CD8-positive, alpha-beta T cell (primary cell): ENCODE measurements at regions of chr21 and their contacts with region 1.

Region 1: DNA sequence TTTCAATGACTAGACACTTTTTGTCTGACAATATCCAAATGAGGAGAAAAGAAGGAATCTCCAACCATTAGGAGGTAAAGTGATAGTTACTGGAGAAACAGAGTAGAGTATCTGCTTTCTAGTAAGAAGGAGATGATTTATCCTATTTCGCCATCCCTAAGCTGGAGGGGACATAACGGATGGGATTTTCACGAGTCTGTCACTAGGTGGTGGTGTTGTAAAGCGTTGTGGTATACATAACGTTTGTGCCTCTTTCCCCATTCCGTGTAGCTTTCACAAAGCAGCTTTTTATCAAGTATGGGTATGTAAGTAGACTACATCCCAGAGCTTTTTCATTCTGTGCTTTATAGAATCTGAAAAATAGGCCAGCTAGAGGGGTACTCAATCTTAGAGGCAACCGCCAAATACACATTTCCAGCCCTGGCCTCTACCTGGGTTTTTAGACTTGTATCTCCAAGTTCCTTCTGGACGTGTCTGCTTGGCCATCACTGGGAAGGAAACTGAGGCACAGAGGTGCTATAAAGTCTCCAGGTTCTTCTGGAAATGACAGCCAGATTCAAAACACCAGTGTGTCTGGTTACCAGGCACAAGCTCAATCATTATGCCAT is 33.3 kb upstream of the FAM3B start:
- DNase-seq: peak in 8 of 9 experiments; percentile 15 to 79 (median 48)
- ATAC-seq: peak; percentile 94
- H3K4me3 ChIP-seq: no peak overlapping the region
- H3K4me3 Mint-ChIP-seq: no peak overlapping the region
- H3K27ac ChIP-seq: no peak overlapping the region
- H3K27ac Mint-ChIP-seq: no peak overlapping the region
- H3K4me1 ChIP-seq: no peaks in the 10 kb centered on the region
- H3K4me1 Mint-ChIP-seq: no peaks in the 10 kb centered on the region
- H3K27me3 ChIP-seq: no peaks in the 10 kb centered on the region
- H3K27me3 Mint-ChIP-seq: peaks cover 11% of the 10 kb centered on the region
- CTCF ChIP-seq: peak; percentile 98

Region 2: DNA sequence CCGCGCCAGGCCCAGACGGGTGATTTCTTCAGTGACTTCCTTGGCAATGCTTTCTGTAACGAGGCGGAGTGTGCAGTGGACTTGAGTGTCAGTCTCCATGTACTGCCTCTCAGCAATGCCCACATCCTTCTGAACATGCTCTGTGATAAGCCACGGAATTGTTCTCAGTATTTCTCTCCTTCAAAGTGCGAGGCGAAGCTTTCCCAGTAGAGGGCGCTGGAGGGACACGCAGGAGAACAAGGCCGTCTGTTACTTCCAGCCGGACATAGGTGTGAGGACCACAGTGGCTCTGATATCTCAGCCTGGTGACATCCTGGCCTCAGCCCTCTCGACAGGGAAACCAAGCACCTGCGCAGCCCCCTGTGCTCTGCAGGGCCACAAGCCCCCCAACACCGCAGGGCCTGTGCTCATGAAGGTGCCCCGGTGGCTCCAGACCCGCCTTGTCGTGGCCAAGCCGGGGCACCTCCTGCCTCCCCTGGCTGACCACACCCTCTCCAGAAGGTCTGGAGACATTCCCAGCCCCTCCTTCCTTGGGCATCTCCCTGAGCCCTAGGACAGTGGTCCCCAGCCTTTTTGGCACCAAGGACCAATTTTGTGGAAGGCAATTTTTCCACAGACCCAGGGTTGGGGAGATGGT is 161.4 kb before region 1 on chr21:
- CTCF ChIA-PET with region 1: no interaction called
- POLR2A ChIA-PET with region 1: no interaction called
- intact Hi-C with region 1: no loop called
- DNase-seq: peak in 6 of 9 experiments; percentile 13 to 51 (median 33)
- ATAC-seq: no peak
- H3K4me3 ChIP-seq: no peak overlapping the region
- H3K4me3 Mint-ChIP-seq: no peak overlapping the region
- H3K27ac ChIP-seq: no peak overlapping the region
- H3K27ac Mint-ChIP-seq: no peak overlapping the region
- H3K4me1 ChIP-seq: no peaks in the 10 kb centered on the region
- H3K4me1 Mint-ChIP-seq: no peaks in the 10 kb centered on the region
- H3K27me3 ChIP-seq: no peaks in the 10 kb centered on the region
- H3K27me3 Mint-ChIP-seq: peaks cover 8% of the 10 kb centered on the region
- CTCF ChIP-seq: peak; percentile 36

Region 3: DNA sequence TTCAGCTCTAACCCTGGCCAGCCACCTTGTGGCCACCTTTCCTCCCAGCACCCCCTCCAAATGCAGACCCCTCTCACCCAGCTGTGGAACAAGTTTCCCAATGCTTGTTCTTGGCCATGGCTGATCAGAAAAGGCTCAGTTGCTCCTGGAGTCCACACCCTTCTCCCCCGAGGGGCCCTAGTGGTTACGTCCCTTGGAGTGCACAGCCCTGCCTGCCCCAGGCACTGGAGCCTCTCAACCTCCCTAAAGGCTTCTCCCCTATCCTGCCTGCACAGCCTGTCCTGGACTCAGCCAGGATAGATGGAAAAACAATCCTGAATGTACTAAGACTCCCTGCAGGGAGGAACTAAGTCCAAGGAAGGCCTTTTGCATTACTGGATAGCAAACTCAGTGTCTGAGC is 97.3 kb after region 1 on chr21:
- CTCF ChIA-PET with region 1: interaction called, 6 read pairs
- POLR2A ChIA-PET with region 1: no interaction called
- intact Hi-C with region 1: loop called in 1 of 2 experiments (anchors 5 kb)
- DNase-seq: no peak
- ATAC-seq: no peak
- H3K4me3 ChIP-seq: no peak overlapping the region
- H3K4me3 Mint-ChIP-seq: no peak overlapping the region
- H3K27ac ChIP-seq: no peak overlapping the region
- H3K27ac Mint-ChIP-seq: no peak overlapping the region
- H3K4me1 ChIP-seq: no peaks in the 10 kb centered on the region
- H3K4me1 Mint-ChIP-seq: no peaks in the 10 kb centered on the region
- H3K27me3 ChIP-seq: no peaks in the 10 kb centered on the region
- H3K27me3 Mint-ChIP-seq: no peaks in the 10 kb centered on the region
- CTCF ChIP-seq: no peak

Region 4: GRCh38 chr21:41445471-41445870 is 162.2 kb after region 1 on chr21:
- CTCF ChIA-PET with region 1: interaction called, 33 read pairs
- POLR2A ChIA-PET with region 1: no interaction called
- intact Hi-C with region 1: no loop called
- DNase-seq: no peak
- ATAC-seq: no peak
- H3K4me3 ChIP-seq: no peak overlapping the region
- H3K4me3 Mint-ChIP-seq: no peak overlapping the region
- H3K27ac ChIP-seq: no peak overlapping the region
- H3K27ac Mint-ChIP-seq: no peak overlapping the region
- H3K4me1 ChIP-seq: no peaks in the 10 kb centered on the region
- H3K4me1 Mint-ChIP-seq: no peaks in the 10 kb centered on the region
- H3K27me3 ChIP-seq: no peaks in the 10 kb centered on the region
- H3K27me3 Mint-ChIP-seq: no peaks in the 10 kb centered on the region
- CTCF ChIP-seq: no peak

Region 5: GRCh38 chr21:41451753-41452676 is 168.7 kb after region 1 on chr21:
- CTCF ChIA-PET with region 1: interaction called, 149 read pairs
- POLR2A ChIA-PET with region 1: interaction called, 3 read pairs
- intact Hi-C with region 1: no loop called
- DNase-seq: no peak
- ATAC-seq: no peak
- H3K4me3 ChIP-seq: no peak overlapping the region
- H3K4me3 Mint-ChIP-seq: no peak overlapping the region
- H3K27ac ChIP-seq: no peak overlapping the region
- H3K27ac Mint-ChIP-seq: no peak overlapping the region
- H3K4me1 ChIP-seq: no peaks in the 10 kb centered on the region
- H3K4me1 Mint-ChIP-seq: no peaks in the 10 kb centered on the region
- H3K27me3 ChIP-seq: no peaks in the 10 kb centered on the region
- H3K27me3 Mint-ChIP-seq: no peaks in the 10 kb centered on the region
- CTCF ChIP-seq: no peak

Region 6: DNA sequence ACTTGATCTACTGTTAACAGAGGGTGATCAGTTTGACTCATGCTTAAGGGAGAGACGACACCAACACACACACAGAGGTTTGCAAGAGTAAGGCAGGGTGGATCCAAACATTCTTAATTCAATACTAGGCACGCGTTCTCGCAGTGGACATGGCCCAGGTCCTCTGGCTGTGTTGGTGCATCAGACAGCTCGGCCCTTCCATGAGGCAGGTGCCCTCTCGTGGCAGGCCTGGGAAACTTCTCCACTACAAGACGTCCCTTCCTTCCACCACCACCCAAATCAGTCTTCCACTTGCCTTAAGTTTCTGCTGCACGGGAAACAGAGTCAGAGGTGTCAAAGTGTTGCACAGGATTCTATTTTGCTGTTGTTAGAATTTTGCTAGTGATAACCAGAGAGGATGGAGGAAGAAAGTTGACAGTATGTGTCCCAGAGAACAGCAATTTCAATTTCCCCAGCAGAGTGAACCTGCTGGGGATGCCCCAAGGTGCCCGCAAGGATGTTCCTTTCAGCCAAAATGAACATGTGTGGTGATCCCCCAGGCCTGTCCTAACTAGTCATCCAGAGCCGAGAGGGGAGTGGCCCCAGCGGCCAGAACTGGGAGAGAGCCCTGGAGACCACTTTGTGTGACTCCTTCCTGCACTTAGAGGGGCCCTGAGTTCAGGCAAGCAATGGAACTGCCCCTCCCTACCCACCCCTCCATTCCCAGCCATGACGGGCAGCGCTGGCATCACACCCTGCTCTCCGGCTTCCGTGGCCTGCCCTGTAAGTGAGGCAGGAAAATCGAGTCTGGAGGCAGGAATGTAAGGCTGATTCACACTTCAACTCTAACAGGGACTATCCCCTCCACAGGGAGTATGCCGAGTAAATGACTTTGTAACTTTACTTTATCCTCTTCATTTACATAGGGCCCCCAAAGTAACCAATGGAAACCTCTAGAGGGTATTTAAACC is 177.5 kb after region 1 on chr21:
- CTCF ChIA-PET with region 1: interaction called, 149 read pairs
- POLR2A ChIA-PET with region 1: interaction called, 3 read pairs
- intact Hi-C with region 1: loop called in 1 of 2 experiments (anchors 1 kb)
- DNase-seq: peak; percentile 7 to 69 (median 56)
- ATAC-seq: peak; percentile 49
- H3K4me3 ChIP-seq: no peak overlapping the region
- H3K4me3 Mint-ChIP-seq: no peak overlapping the region
- H3K27ac ChIP-seq: no peak overlapping the region
- H3K27ac Mint-ChIP-seq: no peak overlapping the region
- H3K4me1 ChIP-seq: no peaks in the 10 kb centered on the region
- H3K4me1 Mint-ChIP-seq: no peaks in the 10 kb centered on the region
- H3K27me3 ChIP-seq: no peaks in the 10 kb centered on the region
- H3K27me3 Mint-ChIP-seq: no peaks in the 10 kb centered on the region
- CTCF ChIP-seq: peak; percentile 55

Region 7: GRCh38 chr21:41816220-41817165 is 533.2 kb after region 1 on chr21:
- CTCF ChIA-PET with region 1: interaction called, 16 read pairs
- POLR2A ChIA-PET with region 1: no interaction called
- intact Hi-C with region 1: loop called in 1 of 2 experiments (anchors 1 kb)
- DNase-seq: peak; percentile 31 to 75 (median 55)
- ATAC-seq: peak; percentile 78
- H3K4me3 ChIP-seq: no peak overlapping the region
- H3K4me3 Mint-ChIP-seq: no peak overlapping the region
- H3K27ac ChIP-seq: no peak overlapping the region
- H3K27ac Mint-ChIP-seq: no peak overlapping the region
- H3K4me1 ChIP-seq: peaks cover 6% of the 10 kb centered on the region
- H3K4me1 Mint-ChIP-seq: peaks cover 7% of the 10 kb centered on the region
- H3K27me3 ChIP-seq: no peaks in the 10 kb centered on the region
- H3K27me3 Mint-ChIP-seq: no peaks in the 10 kb centered on the region
- CTCF ChIP-seq: peak; percentile 72

Region 8: DNA sequence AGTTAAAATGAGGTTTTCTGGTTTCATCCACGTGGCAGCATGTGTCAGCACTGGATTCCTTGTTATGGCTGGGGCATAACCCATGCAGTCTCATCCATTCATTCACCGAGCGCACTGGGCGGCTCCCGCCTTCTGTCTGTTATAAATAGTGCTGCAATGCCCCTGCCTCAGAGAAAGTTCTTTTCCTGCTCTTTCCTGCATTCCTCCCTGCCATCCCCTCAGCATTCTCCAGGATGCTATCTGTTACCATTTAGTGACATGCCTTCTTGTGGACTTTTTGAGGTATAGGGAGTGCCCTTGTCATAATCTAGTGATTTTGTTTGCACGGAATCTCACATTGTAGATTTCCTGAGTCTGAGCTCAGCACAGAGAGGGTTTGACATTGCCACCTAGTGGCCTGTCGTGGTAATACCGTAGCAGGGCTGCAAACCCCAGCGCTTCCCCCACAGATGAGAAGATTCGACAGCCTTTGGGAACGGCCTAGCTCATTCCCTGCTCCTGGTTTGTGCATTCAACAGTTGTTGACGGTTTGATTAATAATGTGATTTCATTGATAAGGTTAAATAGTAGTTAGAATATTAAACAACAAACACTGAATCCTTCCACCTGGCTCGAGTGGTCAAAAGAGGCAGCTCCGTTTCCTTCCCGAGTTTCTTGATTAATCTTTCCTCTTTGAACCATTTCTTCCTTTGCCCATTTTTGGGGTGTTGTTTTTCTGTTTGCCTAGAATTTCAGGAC is 834.1 kb after region 1 on chr21:
- CTCF ChIA-PET with region 1: interaction called, 15 read pairs
- POLR2A ChIA-PET with region 1: no interaction called
- intact Hi-C with region 1: loop called in 1 of 2 experiments (anchors 1 kb)
- DNase-seq: peak; percentile 52 to 87 (median 77)
- ATAC-seq: peak; percentile 96
- H3K4me3 ChIP-seq: no peak overlapping the region
- H3K4me3 Mint-ChIP-seq: no peak overlapping the region
- H3K27ac ChIP-seq: no peak overlapping the region
- H3K27ac Mint-ChIP-seq: no peak overlapping the region
- H3K4me1 ChIP-seq: peaks cover 19% of the 10 kb centered on the region
- H3K4me1 Mint-ChIP-seq: peaks cover 19% of the 10 kb centered on the region
- H3K27me3 ChIP-seq: peaks cover 3 to 12% of the 10 kb centered on the region in 2 experiments
- H3K27me3 Mint-ChIP-seq: peaks cover 44% of the 10 kb centered on the region
- CTCF ChIP-seq: peak; percentile 96